ENCODE measurements at regions of chr9 and their contacts with region 1.

Region 1: GRCh38 chr9:132249123-132249522 is 87.3 kb downstream of the NTNG2 start:
- DNase-seq: no peak
- H3K4me3 ChIP-seq: no peak overlapping the region
- H3K27me3 ChIP-seq: peaks cover 8% of the 10 kb centered on the region
- CTCF ChIP-seq: no peak

Region 2: DNA sequence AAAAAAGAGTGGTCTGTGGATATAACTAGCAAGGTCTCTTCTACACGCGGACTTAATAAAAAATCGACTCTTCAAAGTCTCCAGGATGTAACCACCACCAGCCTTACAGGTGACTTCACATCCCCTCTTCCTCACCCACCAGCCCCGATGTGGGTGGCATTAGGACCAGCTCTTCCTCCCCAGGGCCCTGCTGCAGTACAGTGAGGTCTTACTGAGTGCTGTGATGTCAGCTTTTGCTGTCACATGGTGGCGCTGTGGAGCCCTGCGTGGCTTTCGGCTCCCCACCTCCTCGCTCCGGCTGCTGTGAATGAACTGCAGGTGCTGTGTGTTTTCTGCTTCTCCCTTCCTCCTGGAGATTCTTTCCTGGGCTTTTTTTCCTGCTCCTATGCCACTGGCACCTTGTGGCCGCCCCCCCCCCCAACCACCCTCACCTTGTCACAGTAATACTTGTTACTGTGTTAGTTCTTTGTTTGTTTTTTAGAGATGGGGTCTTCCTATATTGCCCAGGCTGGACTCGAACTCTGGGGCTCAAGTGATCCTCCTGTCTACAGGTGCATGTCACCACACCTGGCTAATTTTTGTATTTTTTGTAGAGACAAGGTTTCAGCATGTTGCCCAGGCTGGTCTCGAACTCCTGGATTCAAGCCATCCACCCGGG is 493.5 kb before region 1 on chr9:
- CTCF ChIA-PET with region 1: interaction called, 194 read pairs
- POLR2A ChIA-PET with region 1: no interaction called
- DNase-seq: no peak
- H3K4me3 ChIP-seq: no peak overlapping the region
- H3K27me3 ChIP-seq: peaks cover 9% of the 10 kb centered on the region
- CTCF ChIP-seq: peak; percentile 90

Region 3: GRCh38 chr9:132260846-132261245 is 11.7 kb after region 1 on chr9:
- CTCF ChIA-PET with region 1: interaction called, 40 read pairs
- POLR2A ChIA-PET with region 1: no interaction called
- DNase-seq: no peak
- H3K4me3 ChIP-seq: no peak overlapping the region
- H3K27me3 ChIP-seq: no peaks in the 10 kb centered on the region
- CTCF ChIP-seq: no peak

Region 4: DNA sequence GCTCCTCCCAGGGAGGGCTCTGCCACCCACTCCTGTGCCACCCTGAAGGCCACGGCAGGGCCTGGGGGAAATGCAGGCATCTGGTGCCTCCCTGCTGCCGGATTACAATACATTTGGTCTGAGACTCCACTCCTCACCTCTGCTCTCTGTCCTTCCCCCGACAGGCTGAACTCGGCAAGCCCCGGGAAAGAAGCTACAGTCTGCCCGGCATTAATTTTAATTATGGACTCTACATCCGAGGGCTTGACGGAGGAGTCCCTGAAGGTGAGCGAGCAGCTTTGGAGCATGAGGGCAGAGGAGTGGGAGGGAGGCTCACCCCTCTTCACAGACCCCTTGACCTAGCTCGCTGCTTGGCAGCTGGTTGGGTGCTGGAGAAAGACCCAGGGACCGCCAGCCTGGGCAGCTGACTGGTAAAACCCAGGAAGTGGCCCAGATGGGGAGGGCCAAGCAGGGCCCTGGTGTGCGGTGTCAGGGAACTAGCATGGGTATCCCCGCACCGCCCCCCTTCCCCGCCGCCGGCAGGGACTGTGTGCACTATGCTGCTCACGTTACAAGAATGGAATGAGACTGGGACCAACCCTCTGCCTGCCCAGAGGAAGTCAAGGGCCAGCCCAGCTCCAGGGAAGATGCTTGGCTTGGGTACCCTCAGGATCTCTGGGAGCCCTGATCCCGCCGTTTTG is 249.5 kb after region 1 on chr9:
- CTCF ChIA-PET with region 1: no interaction called
- POLR2A ChIA-PET with region 1: no interaction called
- DNase-seq: no peak
- H3K4me3 ChIP-seq: no peak overlapping the region
- H3K27me3 ChIP-seq: peaks cover 6% of the 10 kb centered on the region
- CTCF ChIP-seq: no peak

Measured in BJ (cell line).